ENCODE measurements at regions of chr11 and their contacts with region 1.

Region 1: DNA sequence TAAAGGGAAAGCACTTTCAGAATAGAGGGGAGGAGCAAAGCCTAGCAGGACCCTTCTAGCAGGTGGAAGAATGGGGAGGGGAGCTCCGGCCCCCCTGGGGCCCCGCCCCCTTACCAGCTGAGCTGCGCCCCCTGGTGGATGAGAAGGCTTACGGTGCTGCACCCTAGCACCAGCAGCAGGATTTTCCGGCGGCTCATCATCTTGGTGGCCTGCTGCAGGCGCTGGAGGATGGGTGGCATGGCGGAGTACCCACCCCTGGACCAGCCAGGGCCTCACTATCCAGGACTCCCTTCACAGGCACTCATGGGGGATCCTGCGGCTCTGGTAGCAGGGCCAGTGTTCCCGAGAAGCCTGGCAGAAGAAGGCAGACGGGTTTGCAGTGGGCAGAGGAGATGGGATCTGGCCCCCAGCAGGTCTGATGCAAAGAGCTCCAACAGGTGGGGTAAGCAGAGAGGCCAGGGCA is 3.8 kb downstream of the GAL3ST3 start:
- DNase-seq: peak; percentile 87 to 95
- ATAC-seq: peak; percentile 86 to 96
- H3K4me3 ChIP-seq: no peak overlapping the region
- H3K27ac ChIP-seq: peak overlapping the region; percentile 46 to 75; a peak in 3 of 6 replicates
- H3K4me1 ChIP-seq: peaks cover 9% of the 10 kb centered on the region; the same call in 1 of the 3 replicates
- CTCF ChIP-seq: peak; percentile 88
- EP300 ChIP-seq: no peak
- POLR2A ChIP-seq: no peak
- RAD21 ChIP-seq: peak; percentile 48 to 52

Region 2: DNA sequence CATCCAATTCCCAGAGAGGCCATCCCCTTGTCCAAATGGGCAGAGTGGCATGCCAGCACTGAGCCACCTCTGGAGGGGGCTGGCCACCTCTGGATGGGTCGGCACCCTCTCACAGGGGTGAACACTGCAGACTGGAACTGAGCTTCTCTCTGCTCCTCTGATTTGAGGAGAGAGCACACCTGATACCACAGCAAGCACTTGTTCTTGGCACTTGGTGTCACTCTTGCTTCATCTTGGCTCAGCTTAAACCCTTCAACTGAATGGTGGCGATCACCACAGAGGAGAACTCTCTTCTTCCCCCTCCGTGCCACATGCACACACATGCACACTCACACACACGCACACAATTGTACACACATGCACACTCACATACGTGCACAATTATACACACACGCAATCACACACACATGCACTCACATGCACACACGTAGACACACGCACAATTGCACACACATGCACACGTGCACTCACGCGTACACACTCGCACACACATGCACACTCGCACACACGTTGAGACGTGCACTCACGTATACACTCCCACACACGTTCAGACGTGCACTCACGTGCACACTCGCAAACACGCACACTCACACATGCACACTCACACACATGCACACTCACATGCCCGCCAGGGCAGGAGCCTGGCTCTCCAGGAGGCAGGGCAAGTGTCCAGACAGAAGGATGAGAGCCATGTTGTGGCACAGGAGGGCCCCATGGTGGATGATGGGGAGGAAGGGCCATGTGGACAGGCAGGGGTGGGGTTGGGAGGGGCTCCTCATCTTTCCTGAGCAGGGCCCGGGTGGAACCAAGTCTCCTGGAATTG is 235.0 kb before region 1 on chr11:
- CTCF ChIA-PET with region 1: no interaction called
- POLR2A ChIA-PET with region 1: no interaction called
- DNase-seq: peak in 1 of 2 experiments; percentile 32
- ATAC-seq: peak; percentile 54 to 68; a peak in 3 of 6 replicates
- H3K4me3 ChIP-seq: no peak overlapping the region
- H3K27ac ChIP-seq: no peak overlapping the region
- H3K4me1 ChIP-seq: no peaks in the 10 kb centered on the region
- CTCF ChIP-seq: no peak
- EP300 ChIP-seq: no peak
- POLR2A ChIP-seq: 0 out of 2 replicates have a peak, but pooled peaks have one; percentile 4
- RAD21 ChIP-seq: peak in 1 of 2 experiments; percentile 25; a peak in 2 of 5 replicates

Region 3: GRCh38 chr11:65915821-65916251 is 129.4 kb before region 1 on chr11:
- CTCF ChIA-PET with region 1: no interaction called
- POLR2A ChIA-PET with region 1: no interaction called
- DNase-seq: peak; percentile 94 to 98
- ATAC-seq: peak; percentile 71 to 80
- H3K4me3 ChIP-seq: peak overlapping the region; percentile 9; the same call in 1 of the 3 replicates
- H3K27ac ChIP-seq: peak overlapping the region; percentile 93 to 100
- H3K4me1 ChIP-seq: peaks cover 74% of the 10 kb centered on the region
- CTCF ChIP-seq: no peak
- EP300 ChIP-seq: peak; percentile 47 to 86; a peak in 2 of 5 replicates
- POLR2A ChIP-seq: no peak
- RAD21 ChIP-seq: no peak; a peak in 1 of 5 replicates

Region 4: DNA sequence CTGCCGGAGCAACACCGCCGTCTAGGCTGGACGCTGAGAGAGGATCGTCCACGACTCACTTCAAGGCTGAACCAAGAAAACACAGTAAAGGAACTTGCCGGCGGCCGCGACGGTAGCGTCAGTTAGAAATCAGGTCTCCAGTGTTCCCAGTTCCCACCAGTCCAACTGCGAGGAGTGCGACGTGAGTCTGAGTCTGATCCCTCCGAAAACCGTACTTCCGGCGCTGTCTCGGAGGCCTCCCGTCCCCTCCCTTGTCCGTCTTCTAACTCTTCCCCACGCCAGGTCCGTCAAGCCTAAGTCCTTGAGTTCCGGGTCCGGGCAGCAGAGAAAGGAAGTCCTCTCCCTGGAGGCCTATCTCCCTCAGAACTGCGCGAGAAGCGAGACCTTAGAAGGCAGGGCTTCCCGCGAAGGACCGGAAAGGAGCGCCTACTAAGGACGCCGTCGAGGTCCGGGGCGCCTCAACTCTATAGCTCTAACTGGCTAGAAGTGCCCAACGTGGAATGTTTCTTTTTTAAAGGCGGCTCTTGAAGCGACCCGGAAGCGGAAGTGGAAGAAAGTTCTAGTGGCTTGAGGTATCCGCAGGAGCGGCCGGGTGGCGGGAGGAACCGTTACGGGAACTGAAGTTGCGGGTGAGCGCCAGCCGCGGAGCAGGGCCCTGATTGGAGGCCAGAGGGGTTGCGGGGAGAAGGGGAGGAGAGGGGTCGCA is 43.1 kb before region 1 on chr11 and contains the starts of genes BANF1 and EIF1AD:
- CTCF ChIA-PET with region 1: interaction called, 13 read pairs
- POLR2A ChIA-PET with region 1: interaction called, 3 read pairs
- DNase-seq: peak; percentile 92 to 99
- ATAC-seq: peak; percentile 85 to 91
- H3K4me3 ChIP-seq: peak within 1 kb of the TSS; percentile 67
- H3K27ac ChIP-seq: peak within 1 kb of the TSS; percentile 91 to 95
- H3K4me1 ChIP-seq: peaks cover 13% of the 10 kb centered on the region; the same call in 2 of the 3 replicates
- CTCF ChIP-seq: no peak
- EP300 ChIP-seq: no peak; a peak in 1 of 5 replicates
- POLR2A ChIP-seq: peak; percentile 92
- RAD21 ChIP-seq: 0 out of 5 replicates have a peak, but pooled peaks of 1 of the 2 experiments have one; percentile 7
- polyA plus RNA-seq, gene BANF1: 385 and 399 TPM in 2 replicates
- polyA plus RNA-seq, gene EIF1AD: 38.6 and 42.0 TPM in 2 replicates

Region 5: GRCh38 chr11:66011239-66011784 is 33.9 kb before region 1 on chr11:
- CTCF ChIA-PET with region 1: interaction called, 13 read pairs
- POLR2A ChIA-PET with region 1: no interaction called
- DNase-seq: no peak
- ATAC-seq: no peak
- H3K4me3 ChIP-seq: no peak overlapping the region
- H3K27ac ChIP-seq: no peak overlapping the region
- H3K4me1 ChIP-seq: peaks cover 16% of the 10 kb centered on the region
- CTCF ChIP-seq: no peak
- EP300 ChIP-seq: no peak
- POLR2A ChIP-seq: no peak
- RAD21 ChIP-seq: no peak

Region 6: GRCh38 chr11:66061234-66061633 is 16.0 kb after region 1 on chr11:
- CTCF ChIA-PET with region 1: interaction called, 233 read pairs
- POLR2A ChIA-PET with region 1: no interaction called
- DNase-seq: no peak
- ATAC-seq: no peak
- H3K4me3 ChIP-seq: no peak overlapping the region
- H3K27ac ChIP-seq: no peak overlapping the region
- H3K4me1 ChIP-seq: peaks cover 3% of the 10 kb centered on the region; the same call in 1 of the 3 replicates
- CTCF ChIP-seq: no peak
- EP300 ChIP-seq: no peak
- POLR2A ChIP-seq: no peak
- RAD21 ChIP-seq: no peak

Region 7: GRCh38 chr11:66081505-66081904 is 36.3 kb after region 1 on chr11:
- CTCF ChIA-PET with region 1: interaction called, 11 read pairs
- POLR2A ChIA-PET with region 1: interaction called, 5 read pairs
- DNase-seq: no peak
- ATAC-seq: peak in 1 of 2 experiments; percentile 18; a peak in 2 of 6 replicates
- H3K4me3 ChIP-seq: no peak overlapping the region
- H3K27ac ChIP-seq: peak overlapping the region; percentile 58 to 82
- H3K4me1 ChIP-seq: peaks cover 84% of the 10 kb centered on the region
- CTCF ChIP-seq: no peak
- EP300 ChIP-seq: no peak
- POLR2A ChIP-seq: no peak
- RAD21 ChIP-seq: no peak